Mammary epithelial cell (primary cell): ENCODE measurements at regions of chr17 and their contacts with region 1.

Region 1: GRCh38 chr17:21457051-21458026 is 81.2 kb downstream of the KCNJ12 start:
- DNase-seq: peak; percentile 92
- H3K4me3 ChIP-seq: no peak overlapping the region
- H3K27ac ChIP-seq: no peak overlapping the region
- H3K4me1 ChIP-seq: peaks cover 10% of the 10 kb centered on the region
- H3K27me3 ChIP-seq: no peaks in the 10 kb centered on the region
- CTCF ChIP-seq: peak; percentile 66 to 88

Region 2: GRCh38 chr17:21126645-21127510 is 330.5 kb before region 1 on chr17 and contains the start of gene DHRS7B:
- CTCF ChIA-PET with region 1: interaction called, 20 read pairs
- dilution Hi-C with region 1: no loop called
- in situ Hi-C with region 1: loop called in 1 of 2 experiments (anchors 10 kb)
- intact Hi-C with region 1: loop called (anchors 5 kb)
- DNase-seq: peak; percentile 95
- H3K4me3 ChIP-seq: peak within 1 kb of the TSS; percentile 63 to 97 (median 71)
- H3K27ac ChIP-seq: peak within 1 kb of the TSS; percentile 71
- H3K4me1 ChIP-seq: peaks cover 12% of the 10 kb centered on the region
- H3K27me3 ChIP-seq: no peaks in the 10 kb centered on the region
- CTCF ChIP-seq: peak in 1 of 2 donors; percentile 14
- total RNA-seq, gene DHRS7B: 27.3 to 29.5 TPM

Region 3: DNA sequence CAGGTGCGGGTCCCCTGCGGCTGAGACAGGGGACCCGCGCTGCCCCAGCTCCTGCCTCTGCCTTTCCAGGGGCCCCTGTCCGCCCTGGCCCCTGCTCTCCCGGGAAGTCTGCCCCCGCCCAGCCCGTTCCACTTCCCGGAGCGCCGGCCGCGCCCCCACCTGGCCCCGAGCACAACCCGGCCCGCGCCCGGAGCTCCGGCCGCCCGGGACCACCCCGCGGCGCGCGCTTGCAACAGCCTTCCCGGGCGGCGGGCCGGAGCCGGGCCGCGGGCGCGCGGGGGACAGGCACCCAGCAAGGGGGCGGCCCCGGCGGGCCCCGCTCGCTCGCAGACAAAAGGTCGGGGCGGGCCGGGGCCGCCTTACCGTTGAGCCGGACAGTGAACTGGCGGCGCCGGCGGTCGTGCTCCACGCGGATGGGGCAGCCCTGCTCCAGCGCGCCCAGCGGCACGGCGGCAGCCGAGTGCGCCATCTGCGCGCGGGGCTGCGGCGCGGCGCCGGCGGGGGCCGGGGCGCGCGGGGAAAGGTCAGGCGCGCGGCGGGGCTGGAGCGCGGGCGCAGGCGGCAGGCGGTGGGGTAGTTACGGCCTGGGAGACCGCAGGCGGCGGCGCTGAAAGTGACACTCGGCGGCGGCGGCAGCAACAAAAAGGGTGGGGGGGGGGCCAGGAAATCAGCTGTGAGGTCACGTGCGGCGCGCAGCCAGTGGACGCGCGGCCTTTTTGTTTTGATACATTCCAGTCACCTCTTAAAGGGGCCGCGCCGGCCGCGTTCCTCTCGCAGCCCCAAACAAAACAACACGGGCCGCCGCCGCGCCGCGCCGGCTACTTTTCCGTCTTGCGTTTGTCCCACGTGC is 204.3 kb before region 1 on chr17 and contains the start of gene NATD1:
- CTCF ChIA-PET with region 1: no interaction called
- dilution Hi-C with region 1: no loop called
- in situ Hi-C with region 1: loop called in 1 of 2 experiments (anchors 25 kb)
- intact Hi-C with region 1: no loop called
- DNase-seq: peak; percentile 73
- H3K4me3 ChIP-seq: peak within 1 kb of the TSS; percentile 53 to 62 (median 56)
- H3K27ac ChIP-seq: peak within 1 kb of the TSS; percentile 30
- H3K4me1 ChIP-seq: peaks cover 26% of the 10 kb centered on the region
- H3K27me3 ChIP-seq: no peaks in the 10 kb centered on the region
- CTCF ChIP-seq: no peak
- total RNA-seq, gene NATD1: 6.1 to 10.8 TPM

Region 4: DNA sequence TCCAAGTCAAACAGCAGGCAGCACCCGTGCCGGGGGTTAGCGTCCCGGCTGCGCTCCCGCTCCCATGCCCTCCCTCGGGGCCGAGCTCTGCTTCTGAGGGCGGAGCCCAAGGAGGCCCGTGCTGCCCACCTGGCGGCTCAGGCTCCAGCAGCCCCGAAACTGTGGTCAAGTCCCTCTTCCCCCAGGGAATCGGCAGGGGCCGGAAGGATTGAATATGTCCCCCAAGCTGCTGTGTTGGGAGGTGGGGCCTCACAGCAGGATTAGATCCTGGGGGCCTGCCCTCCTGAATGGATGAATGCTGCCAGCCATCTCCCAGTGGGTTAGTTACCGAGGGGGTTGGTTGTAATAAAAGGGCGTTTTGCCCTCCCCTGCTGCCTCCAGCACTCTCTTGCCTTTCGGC is 138.9 kb before region 1 on chr17:
- CTCF ChIA-PET with region 1: no interaction called
- dilution Hi-C with region 1: no loop called
- in situ Hi-C with region 1: no loop called
- intact Hi-C with region 1: loop called (anchors 10 kb)
- DNase-seq: no peak
- H3K4me3 ChIP-seq: no peak overlapping the region
- H3K27ac ChIP-seq: no peak overlapping the region
- H3K4me1 ChIP-seq: no peaks in the 10 kb centered on the region
- H3K27me3 ChIP-seq: no peaks in the 10 kb centered on the region
- CTCF ChIP-seq: no peak

Region 5: GRCh38 chr17:21539146-21539545 is 81.8 kb after region 1 on chr17:
- CTCF ChIA-PET with region 1: interaction called, 22 read pairs
- dilution Hi-C with region 1: no loop called
- in situ Hi-C with region 1: no loop called
- intact Hi-C with region 1: no loop called
- DNase-seq: peak; percentile 62
- H3K4me3 ChIP-seq: no peak overlapping the region
- H3K27ac ChIP-seq: no peak overlapping the region
- H3K4me1 ChIP-seq: no peaks in the 10 kb centered on the region
- H3K27me3 ChIP-seq: no peaks in the 10 kb centered on the region
- CTCF ChIP-seq: no peak

Region 6: DNA sequence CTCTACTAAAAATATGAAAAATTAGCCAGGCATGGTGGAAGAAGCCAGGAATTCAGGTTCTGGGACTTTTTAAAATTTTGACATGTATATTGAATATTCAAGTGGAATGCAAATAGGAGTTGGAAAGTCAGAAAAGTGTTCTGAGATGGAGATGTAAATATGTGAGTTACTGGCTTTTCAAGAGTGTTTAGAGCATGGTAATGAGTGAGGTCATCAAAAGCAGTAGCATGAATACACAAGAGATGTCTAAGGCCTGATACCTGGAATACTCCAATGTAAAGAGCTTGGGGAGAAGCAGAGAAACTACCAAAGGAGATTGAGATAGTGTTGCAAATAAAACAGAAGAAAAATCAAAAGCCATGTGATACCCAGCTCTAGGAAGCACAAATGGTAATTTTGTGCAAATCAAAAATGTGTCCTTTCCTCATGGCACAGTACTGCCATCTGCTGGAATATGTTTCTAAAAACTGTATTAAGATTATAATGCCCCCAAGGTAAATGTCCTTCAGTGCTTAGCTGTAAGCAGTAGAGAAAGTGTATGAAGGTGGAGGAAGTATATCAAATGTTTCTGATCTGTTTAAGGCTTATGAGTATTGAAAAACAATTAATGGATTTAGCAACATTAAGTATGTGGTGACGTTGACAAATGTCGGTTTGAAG is 1143.4 kb after region 1 on chr17:
- CTCF ChIA-PET with region 1: no interaction called
- dilution Hi-C with region 1: no loop called
- in situ Hi-C with region 1: no loop called
- intact Hi-C with region 1: loop called (anchors 10 kb)
- DNase-seq: peak; percentile 2
- H3K4me3 ChIP-seq: no peak overlapping the region
- H3K27ac ChIP-seq: no peak overlapping the region
- H3K4me1 ChIP-seq: no peaks in the 10 kb centered on the region
- H3K27me3 ChIP-seq: no peaks in the 10 kb centered on the region
- CTCF ChIP-seq: peak in 1 of 2 donors; percentile 29